ENCODE measurements at regions of chr17 and their contacts with region 1.

Region 1: DNA sequence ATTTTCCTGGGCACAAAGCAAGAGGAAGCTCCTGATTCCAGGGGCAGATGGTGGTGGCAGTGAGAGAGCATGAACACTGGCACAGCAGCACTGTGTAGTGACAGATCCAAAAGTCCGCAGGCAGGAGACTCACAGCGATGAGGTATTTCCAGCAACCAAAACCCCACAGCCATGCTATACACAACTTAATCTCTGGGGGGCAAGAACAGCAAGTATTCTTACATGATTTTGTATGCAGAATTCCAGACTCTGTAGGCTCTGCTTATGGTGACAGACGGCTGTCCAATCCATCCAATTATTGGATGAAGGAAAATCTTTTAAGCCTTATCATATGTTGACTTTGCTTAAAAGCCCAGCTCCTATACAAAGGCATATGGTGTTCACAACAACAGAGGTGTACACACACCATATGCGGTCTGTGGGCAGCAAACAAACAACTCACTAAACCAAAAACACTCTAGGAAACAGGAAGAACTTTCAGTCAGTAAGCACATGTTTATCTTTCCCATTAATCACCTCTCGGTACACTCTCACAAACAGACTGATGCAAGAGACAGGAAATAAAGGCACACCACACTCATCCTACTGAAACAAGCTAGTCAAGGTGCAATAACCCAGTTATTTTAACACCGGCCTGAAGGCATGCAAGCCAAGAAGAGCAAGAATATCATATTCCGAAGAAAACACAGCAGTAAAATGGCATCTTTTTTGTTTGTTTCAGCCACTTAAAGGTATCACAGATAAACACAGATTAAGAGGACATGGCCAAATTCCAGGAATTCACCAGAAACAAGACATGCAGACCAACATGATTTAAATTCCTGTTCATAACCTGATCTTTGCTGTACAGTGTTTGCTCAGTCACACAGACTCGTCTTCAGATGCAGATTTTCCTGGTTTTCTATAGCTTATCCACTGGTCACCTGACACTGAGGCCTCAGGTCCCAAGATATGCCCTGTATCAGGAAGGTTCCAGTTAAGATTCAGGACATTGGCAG is 47.8 kb downstream of the ERN1 start:
- DNase-seq: peak; percentile 65
- ATAC-seq: peak; percentile 87
- H3K4me3 Mint-ChIP-seq: peak overlapping the region; percentile 56
- H3K27ac Mint-ChIP-seq: no peak overlapping the region
- H3K4me1 Mint-ChIP-seq: peaks cover 28% of the 10 kb centered on the region
- H3K27me3 Mint-ChIP-seq: no peaks in the 10 kb centered on the region

Region 2: DNA sequence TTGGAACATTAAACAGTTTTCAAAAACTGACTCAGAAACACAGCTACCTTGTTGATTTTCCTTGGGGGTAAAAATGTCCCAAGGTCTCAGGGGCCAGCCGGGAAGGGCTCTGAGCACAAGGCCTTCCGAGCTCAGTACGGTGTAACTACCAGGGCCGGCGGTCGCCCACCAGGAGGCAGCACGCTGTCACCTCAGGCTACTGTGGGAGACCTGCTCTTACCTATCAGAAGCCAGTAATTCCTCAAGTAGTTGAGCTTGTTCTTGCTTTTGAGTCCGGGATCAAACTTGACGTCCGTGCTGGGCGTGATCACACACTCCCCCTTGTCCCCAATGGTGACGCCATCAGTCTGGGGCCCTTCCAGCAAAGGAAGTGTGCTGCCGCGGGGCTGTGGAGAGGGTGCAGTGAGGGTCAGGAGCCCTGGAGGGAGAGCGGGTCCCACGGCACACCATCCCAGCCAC is 18.3 kb before region 1 on chr17:
- CTCF ChIA-PET with region 1: interaction called, 18 read pairs
- POLR2A ChIA-PET with region 1: no interaction called
- intact Hi-C with region 1: loop called (anchors 1 to 2 kb)
- DNase-seq: peak; percentile 84
- ATAC-seq: peak; percentile 45
- H3K4me3 Mint-ChIP-seq: peak overlapping the region; percentile 56
- H3K27ac Mint-ChIP-seq: peak overlapping the region; percentile 85
- H3K4me1 Mint-ChIP-seq: peaks cover 84% of the 10 kb centered on the region
- H3K27me3 Mint-ChIP-seq: no peaks in the 10 kb centered on the region